Breast epithelium (tissue), 4 donors: ENCODE measurements at regions of chr11 and their contacts with region 1.

Region 1: GRCh38 chr11:21625982-21626381 is 566.9 kb upstream of the ANO5 start:
- DNase-seq: no peak
- H3K4me3 ChIP-seq: no peak overlapping the region
- H3K27ac ChIP-seq: no peak overlapping the region
- H3K4me1 ChIP-seq: no peaks in the 10 kb centered on the region
- H3K27me3 ChIP-seq: peaks cover 0 to 3% of the 10 kb centered on the region in 2 donors
- CTCF ChIP-seq: no peak
- POLR2A ChIP-seq: no peak

Region 2: DNA sequence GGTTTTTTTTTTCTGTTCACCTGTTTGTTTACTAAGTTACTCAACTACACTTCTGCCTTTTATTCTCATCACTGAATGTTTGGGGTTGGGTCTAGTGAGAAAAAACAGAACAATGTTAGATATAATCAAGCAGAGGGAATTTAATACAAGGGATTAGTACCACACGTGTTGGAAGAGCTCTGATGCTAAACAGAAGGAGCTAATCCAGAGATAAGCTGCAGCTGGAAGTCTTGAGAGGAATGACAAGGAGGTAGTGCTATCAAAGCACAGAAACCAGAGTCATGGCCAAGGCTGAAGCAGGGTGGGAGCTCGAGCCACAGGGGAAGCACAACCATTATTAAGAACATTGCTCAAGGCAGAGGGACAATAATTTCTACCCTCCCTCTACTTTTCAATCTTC is 37.2 kb before region 1 on chr11:
- intact Hi-C with region 1: no loop called
- DNase-seq: no peak
- H3K4me3 ChIP-seq: no peak overlapping the region
- H3K27ac ChIP-seq: no peak overlapping the region
- H3K4me1 ChIP-seq: no peaks in the 10 kb centered on the region
- H3K27me3 ChIP-seq: no peaks in the 10 kb centered on the region
- CTCF ChIP-seq: no peak
- POLR2A ChIP-seq: no peak

Region 3: DNA sequence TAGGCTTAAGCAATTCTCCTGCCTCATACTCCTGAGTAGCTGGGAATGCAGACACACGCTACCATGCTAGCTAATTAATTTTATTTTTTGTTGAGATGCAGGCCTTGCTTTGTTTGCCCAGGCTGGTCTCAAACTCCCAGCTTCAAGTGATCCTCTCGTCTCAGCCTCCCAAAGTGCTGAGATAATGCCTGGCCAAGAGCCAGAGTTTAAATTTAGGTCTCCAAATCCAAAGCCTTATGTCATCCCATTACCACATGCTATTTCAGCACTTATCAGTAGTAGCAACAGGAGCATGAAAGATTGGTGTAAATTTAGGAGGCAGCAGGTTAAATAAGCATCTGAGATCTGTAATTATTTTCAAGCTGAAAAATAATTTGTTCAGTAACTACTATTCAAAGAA is 240.8 kb after region 1 on chr11:
- intact Hi-C with region 1: loop called (anchors 10 kb)
- DNase-seq: no peak
- H3K4me3 ChIP-seq: no peak overlapping the region
- H3K27ac ChIP-seq: no peak overlapping the region
- H3K4me1 ChIP-seq: no peaks in the 10 kb centered on the region
- H3K27me3 ChIP-seq: no peaks in the 10 kb centered on the region
- CTCF ChIP-seq: no peak
- POLR2A ChIP-seq: no peak